Breast epithelium (tissue), 4 donors: ENCODE measurements at regions of chr11 and their contacts with region 1.

Region 1: DNA sequence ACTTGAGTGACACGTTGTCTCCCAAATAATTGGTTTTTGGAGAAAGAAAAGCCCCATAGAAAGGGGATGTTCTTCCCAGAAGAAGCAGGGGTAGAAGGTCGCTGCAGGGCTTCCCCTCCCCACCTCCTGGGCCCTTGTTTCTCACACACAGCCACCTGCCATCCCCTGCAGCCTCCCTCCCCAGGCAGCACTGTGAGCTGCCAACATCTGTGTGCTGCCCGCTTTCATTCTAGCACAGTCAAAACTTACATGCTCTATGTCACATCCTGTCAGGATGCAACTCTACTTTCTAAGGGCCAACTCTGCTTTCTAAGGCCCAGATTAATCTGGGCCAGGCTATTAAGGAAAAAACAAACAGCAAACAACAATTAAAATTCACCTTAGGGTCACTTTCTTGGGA is 309.4 kb upstream of the ZC3H12C start:
- DNase-seq: no peak
- H3K4me3 ChIP-seq: no peak overlapping the region
- H3K27ac ChIP-seq: no peak overlapping the region
- H3K4me1 ChIP-seq: no peaks in the 10 kb centered on the region
- H3K27me3 ChIP-seq: no peaks in the 10 kb centered on the region
- CTCF ChIP-seq: no peak
- POLR2A ChIP-seq: no peak

Region 2: GRCh38 chr11:109735128-109735527 is 48.7 kb before region 1 on chr11:
- intact Hi-C with region 1: loop called (anchors 2 kb)
- DNase-seq: no peak
- H3K4me3 ChIP-seq: no peak overlapping the region
- H3K27ac ChIP-seq: no peak overlapping the region
- H3K4me1 ChIP-seq: no peaks in the 10 kb centered on the region
- H3K27me3 ChIP-seq: no peaks in the 10 kb centered on the region
- CTCF ChIP-seq: no peak
- POLR2A ChIP-seq: no peak